Activated CD4-positive, alpha-beta memory T cell treated with anti-CD3 and anti-CD28 coated beads, Interleukin-2, amount 10 ng/mL, durations not matched to agents 7 days and 5 days (primary cell): ENCODE measurements at regions of chr11 and their contacts with region 1.

Region 1: DNA sequence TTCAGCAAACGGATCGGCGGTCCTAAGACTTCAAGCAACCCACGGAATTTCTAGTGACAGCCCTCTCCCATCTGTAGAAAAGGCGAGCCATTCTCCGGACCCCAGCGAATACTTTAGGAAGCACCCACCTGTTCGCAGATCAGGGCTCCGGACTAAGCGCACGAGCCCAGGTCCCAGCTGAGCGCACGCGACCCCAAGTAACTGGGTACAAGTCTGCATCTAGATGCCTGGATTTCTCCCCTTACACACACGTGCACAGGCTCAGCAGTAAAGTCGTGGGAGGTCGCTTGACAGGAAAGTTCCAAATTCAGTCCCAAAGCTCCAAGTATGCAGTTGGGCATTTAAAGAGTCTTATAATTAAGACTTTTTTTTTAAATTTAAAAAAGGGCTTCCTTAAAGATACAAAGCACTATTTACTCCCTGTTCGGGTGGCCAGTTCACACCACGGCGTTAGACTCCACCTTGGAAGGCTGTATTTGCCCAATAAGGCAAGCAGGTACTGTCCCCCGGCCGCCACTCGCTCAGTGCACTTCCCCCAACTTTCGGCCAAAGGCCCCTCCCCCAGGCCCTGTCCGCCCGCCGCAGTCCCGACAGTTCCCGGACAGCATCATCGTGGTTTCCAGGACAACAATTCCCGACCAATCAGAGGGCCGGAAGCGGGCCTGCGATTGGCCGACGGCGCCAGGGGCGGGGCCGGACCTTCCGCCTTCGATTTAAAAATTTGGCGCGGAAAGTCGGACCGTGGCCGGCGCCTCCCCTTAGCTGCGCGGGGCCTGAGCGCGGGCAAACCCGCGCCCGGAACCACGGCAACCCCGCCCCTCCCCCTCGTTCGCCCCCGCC is at the start of gene E2F8:
- DNase-seq: peak; percentile 95
- H3K4me3 Mint-ChIP-seq: peak within 1 kb of the TSS; percentile 98
- H3K27ac Mint-ChIP-seq: peak within 1 kb of the TSS; percentile 77
- H3K4me1 Mint-ChIP-seq: peaks cover 49% of the 10 kb centered on the region
- H3K27me3 Mint-ChIP-seq: no peaks in the 10 kb centered on the region
- total RNA-seq, gene E2F8: 37.3 to 40.8 TPM

Region 2: GRCh38 chr11:19252394-19253152 is 11.9 kb after region 1 on chr11:
- CTCF ChIA-PET with region 1: no interaction called
- POLR2A ChIA-PET with region 1: interaction called, 10 read pairs
- DNase-seq: no peak
- H3K4me3 Mint-ChIP-seq: no peak overlapping the region
- H3K27ac Mint-ChIP-seq: no peak overlapping the region
- H3K4me1 Mint-ChIP-seq: no peaks in the 10 kb centered on the region
- H3K27me3 Mint-ChIP-seq: peaks cover 46% of the 10 kb centered on the region